MCF 10A (cell line): ENCODE measurements at regions of chrX and their contacts with region 1.

Region 1: GRCh38 chrX:132092439-132093065 is 35.3 kb downstream of the FRMD7 start:
- DNase-seq: peak; percentile 73
- H3K4me3 Mint-ChIP-seq: no peak overlapping the region
- H3K27ac Mint-ChIP-seq: no peak overlapping the region
- H3K4me1 Mint-ChIP-seq: peaks cover 6% of the 10 kb centered on the region
- H3K27me3 Mint-ChIP-seq: peaks cover 55% of the 10 kb centered on the region
- CTCF ChIP-seq: peak; percentile 80

Region 2: GRCh38 chrX:132219343-132219768 is 126.8 kb after region 1 on chrX and contains the start of gene RAP2C:
- CTCF ChIA-PET with region 1: interaction called, 35 read pairs
- POLR2A ChIA-PET with region 1: interaction called, 17 read pairs
- intact Hi-C with region 1: loop called (anchors 1 kb)
- DNase-seq: peak; percentile 78
- H3K4me3 Mint-ChIP-seq: peak within 1 kb of the TSS; percentile 80
- H3K27ac Mint-ChIP-seq: peak within 1 kb of the TSS; percentile 72
- H3K4me1 Mint-ChIP-seq: peaks cover 7% of the 10 kb centered on the region
- H3K27me3 Mint-ChIP-seq: peaks cover 66% of the 10 kb centered on the region
- CTCF ChIP-seq: peak; percentile 48
- total RNA-seq, gene RAP2C: 36.3 and 37.0 TPM in 2 replicates

Region 3: DNA sequence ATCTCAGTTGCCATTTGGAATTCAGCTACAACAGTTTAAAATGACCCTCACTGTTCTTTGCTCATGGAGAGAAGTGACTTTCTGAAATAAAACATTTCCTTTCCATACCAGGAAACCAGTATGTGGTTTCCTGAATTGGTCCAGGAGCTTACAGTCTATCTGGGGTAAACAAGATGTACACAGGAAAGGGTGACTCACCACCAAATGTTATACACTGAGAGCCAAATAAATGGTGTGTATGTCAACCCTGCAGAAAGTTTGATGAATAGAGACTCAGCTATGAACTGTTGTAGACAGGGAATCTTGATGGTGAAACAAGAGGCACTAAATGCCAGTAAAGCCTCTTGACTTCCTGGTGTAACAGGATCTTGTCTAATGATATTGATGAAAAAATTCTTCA is 765.5 kb after region 1 on chrX:
- CTCF ChIA-PET with region 1: no interaction called
- POLR2A ChIA-PET with region 1: no interaction called
- intact Hi-C with region 1: no loop called
- DNase-seq: peak; percentile 69
- H3K4me3 Mint-ChIP-seq: no peak overlapping the region
- H3K27ac Mint-ChIP-seq: no peak overlapping the region
- H3K4me1 Mint-ChIP-seq: peaks cover 13% of the 10 kb centered on the region
- H3K27me3 Mint-ChIP-seq: peaks cover 21% of the 10 kb centered on the region
- CTCF ChIP-seq: no peak